ENCODE measurements at regions of chr18 and their contacts with region 1.

Region 1: GRCh38 chr18:13558124-13558523 is 168.2 kb downstream of the FAM210A start:
- DNase-seq: peak; percentile 49 to 66 (median 62)
- H3K4me3 ChIP-seq: peak overlapping the region in 1 of 7 experiments; percentile 13
- H3K27ac ChIP-seq: no peak overlapping the region
- H3K4me1 ChIP-seq: peaks cover 12 to 40% (median 34%) of the 10 kb centered on the region in 4 experiments
- H3K27me3 ChIP-seq: no peaks in the 10 kb centered on the region

Region 2: DNA sequence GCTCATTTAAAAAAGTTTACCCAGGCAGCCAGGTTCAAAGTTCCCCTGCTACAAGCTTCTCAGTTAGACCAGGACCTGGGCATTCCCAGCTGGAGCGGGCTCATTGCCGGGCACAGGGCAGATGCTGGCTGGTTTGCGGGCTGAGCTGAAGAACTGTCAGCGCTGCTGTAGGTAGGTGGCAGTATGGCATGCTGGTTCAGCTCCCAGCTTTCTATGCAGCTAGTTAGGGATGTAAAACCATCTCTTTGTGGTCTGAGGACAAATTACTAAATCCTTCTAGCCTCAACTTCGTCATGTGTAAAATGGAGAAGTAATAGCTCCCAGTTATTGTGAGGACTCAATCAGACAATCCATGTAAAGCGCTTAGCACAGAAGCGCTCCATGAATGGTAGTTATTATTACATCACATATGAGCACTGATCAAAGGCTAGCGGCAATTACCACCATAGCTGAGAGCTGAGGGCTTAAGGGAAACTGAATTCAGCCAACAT is 342.0 kb before region 1 on chr18:
- CTCF ChIA-PET with region 1: interaction called, 16 read pairs
- POLR2A ChIA-PET with region 1: no interaction called
- DNase-seq: peak; percentile 80 to 84 (median 83)
- H3K4me3 ChIP-seq: peak overlapping the region in 1 of 7 experiments; percentile 95
- H3K27ac ChIP-seq: no peak overlapping the region
- H3K4me1 ChIP-seq: peaks cover 17 to 46% (median 30%) of the 10 kb centered on the region in 4 experiments
- H3K27me3 ChIP-seq: no peaks in the 10 kb centered on the region

Region 3: GRCh38 chr18:13577091-13577697 is 19.1 kb after region 1 on chr18:
- CTCF ChIA-PET with region 1: interaction called, 19 read pairs
- POLR2A ChIA-PET with region 1: no interaction called
- DNase-seq: peak; percentile 66 to 91 (median 88)
- H3K4me3 ChIP-seq: peak overlapping the region in 4 of 7 experiments; percentile 2 to 51 (median 28)
- H3K27ac ChIP-seq: no peak overlapping the region
- H3K4me1 ChIP-seq: peaks cover 13 to 56% (median 34%) of the 10 kb centered on the region in 4 experiments
- H3K27me3 ChIP-seq: no peaks in the 10 kb centered on the region

Region 4: GRCh38 chr18:13611601-13612195 is 53.6 kb after region 1 on chr18:
- CTCF ChIA-PET with region 1: interaction called, 141 read pairs
- POLR2A ChIA-PET with region 1: interaction called, 20 read pairs
- DNase-seq: no peak
- H3K4me3 ChIP-seq: peak overlapping the region in 6 of 7 experiments; percentile 38 to 79 (median 63)
- H3K27ac ChIP-seq: peak overlapping the region; percentile 30 to 65
- H3K4me1 ChIP-seq: peaks cover 21 to 78% (median 66%) of the 10 kb centered on the region in 4 experiments
- H3K27me3 ChIP-seq: no peaks in the 10 kb centered on the region

Region 5: GRCh38 chr18:13621886-13622619 is 63.9 kb after region 1 on chr18:
- CTCF ChIA-PET with region 1: interaction called, 191 read pairs
- POLR2A ChIA-PET with region 1: interaction called, 3 read pairs
- DNase-seq: no peak
- H3K4me3 ChIP-seq: no peak overlapping the region
- H3K27ac ChIP-seq: no peak overlapping the region
- H3K4me1 ChIP-seq: peaks cover 4 to 17% (median 5%) of the 10 kb centered on the region in 4 experiments
- H3K27me3 ChIP-seq: no peaks in the 10 kb centered on the region

Region 6: GRCh38 chr18:13629841-13630715 is 72.0 kb after region 1 on chr18:
- CTCF ChIA-PET with region 1: interaction called, 191 read pairs
- POLR2A ChIA-PET with region 1: interaction called, 5 read pairs
- DNase-seq: peak; percentile 75 to 85 (median 84)
- H3K4me3 ChIP-seq: no peak overlapping the region
- H3K27ac ChIP-seq: no peak overlapping the region
- H3K4me1 ChIP-seq: peaks cover 12 to 26% (median 15%) of the 10 kb centered on the region in 4 experiments
- H3K27me3 ChIP-seq: no peaks in the 10 kb centered on the region

Region 7: DNA sequence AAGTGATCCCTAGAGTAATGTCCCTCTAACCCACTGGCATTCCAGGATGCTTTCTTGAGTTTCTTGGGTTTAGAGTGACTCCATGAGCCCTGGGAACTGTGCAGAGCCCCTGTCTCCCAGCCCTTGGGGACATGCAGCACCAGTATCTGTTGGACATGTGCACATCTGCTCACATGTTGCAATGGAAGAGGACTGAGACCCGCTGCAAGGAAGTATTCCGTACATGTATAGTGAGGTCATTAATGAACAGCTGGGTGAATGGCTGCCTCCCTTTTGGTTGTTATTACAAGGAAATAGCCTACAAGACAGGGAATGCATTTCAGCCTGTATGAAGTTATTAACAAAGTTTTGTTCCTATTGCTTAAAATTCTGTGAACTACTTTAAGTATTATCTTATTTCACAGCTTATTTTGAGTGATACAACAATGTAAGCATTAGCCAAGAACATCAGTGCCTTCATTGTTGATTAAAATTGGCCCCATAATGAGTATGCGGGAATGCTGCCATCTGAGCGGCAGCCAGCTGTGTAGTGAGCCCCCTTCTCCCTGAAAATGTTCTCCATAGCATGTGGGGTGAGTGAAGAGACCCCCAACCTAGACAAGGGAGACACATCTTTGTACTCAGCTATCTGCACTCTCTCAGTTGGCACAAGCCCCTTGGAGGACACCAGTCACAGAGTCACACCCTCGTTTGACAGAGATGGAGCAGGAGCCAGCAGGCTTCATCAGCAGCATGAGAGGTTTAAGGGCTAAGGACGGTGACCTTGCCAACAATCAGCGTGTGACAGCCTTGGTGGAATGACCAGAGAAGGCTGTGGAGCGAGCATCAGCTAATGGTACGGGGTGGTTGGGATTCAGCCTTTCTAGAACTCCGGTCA is 80.8 kb after region 1 on chr18:
- CTCF ChIA-PET with region 1: interaction called, 191 read pairs
- POLR2A ChIA-PET with region 1: no interaction called
- DNase-seq: no peak
- H3K4me3 ChIP-seq: no peak overlapping the region
- H3K27ac ChIP-seq: no peak overlapping the region
- H3K4me1 ChIP-seq: peaks cover 0 to 17% (median 7%) of the 10 kb centered on the region in 4 experiments
- H3K27me3 ChIP-seq: no peaks in the 10 kb centered on the region